ENCODE measurements at regions of chrX and their contacts with region 1.

Region 1: DNA sequence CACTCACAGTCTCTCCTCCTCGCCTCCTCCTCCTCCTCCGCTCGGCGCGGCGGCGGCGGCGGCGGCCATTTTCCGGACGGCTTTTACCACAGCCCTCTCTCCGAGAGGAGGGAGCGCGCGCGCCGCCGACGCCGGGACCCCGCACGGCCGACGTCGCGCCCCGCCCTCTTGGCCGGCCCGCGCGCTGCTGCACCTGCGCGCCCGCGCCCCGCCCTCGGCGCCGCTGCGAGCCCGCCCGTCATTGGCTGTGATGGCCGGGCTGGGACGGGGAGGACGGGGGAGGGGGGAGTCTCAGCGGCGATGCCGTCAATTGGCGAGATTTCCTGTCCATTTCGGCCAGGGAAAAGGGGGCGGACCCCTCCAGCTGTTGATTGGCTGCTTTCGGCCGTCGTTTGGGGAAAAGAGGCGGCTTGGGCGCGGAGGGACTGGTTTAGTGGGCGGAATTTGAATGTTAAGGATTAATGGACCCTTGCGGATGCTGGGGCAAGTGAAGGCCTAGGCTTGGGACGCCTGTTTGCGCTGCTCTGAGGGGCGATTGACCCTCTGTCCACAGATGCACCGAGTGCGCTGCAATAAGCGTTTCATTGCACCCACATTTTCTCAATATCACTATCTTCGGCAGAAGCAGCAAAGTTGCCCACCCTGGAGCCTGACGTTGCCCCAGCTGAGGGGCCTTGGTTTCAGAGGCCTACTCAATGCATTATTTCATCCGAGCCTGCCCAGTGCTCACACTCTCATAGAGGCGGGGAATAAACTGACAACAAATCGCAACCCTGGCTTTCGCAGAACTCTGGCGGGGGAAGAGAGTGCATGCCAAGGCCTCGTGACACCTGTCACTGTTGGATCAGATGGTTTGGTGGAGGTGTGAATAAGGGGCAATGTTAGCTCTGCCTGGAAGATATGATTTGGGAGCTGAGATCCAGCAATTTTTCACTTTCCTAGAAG is at the start of gene MECP2:
- DNase-seq: peak; percentile 72 to 93 (median 83)
- ATAC-seq: peak; percentile 88
- H3K4me3 ChIP-seq: peak within 1 kb of the TSS; percentile 84 to 85
- H3K4me3 Mint-ChIP-seq: peak within 1 kb of the TSS; percentile 97
- H3K27ac ChIP-seq: peak within 1 kb of the TSS; percentile 88 to 90
- H3K27ac Mint-ChIP-seq: peak within 1 kb of the TSS; percentile 99
- H3K4me1 ChIP-seq: peaks cover 34% of the 10 kb centered on the region
- H3K4me1 Mint-ChIP-seq: peaks cover 34% of the 10 kb centered on the region
- H3K27me3 ChIP-seq: no peaks in the 10 kb centered on the region
- H3K27me3 Mint-ChIP-seq: no peaks in the 10 kb centered on the region
- CTCF ChIP-seq: no peak
- total RNA-seq, gene MECP2: 106 to 204 TPM

Region 2: GRCh38 chrX:153470435-153471363 is 627.2 kb before region 1 on chrX and contains the start of gene HAUS7:
- CTCF ChIA-PET with region 1: no interaction called
- POLR2A ChIA-PET with region 1: no interaction called
- intact Hi-C with region 1: no loop called
- DNase-seq: peak; percentile 73 to 94 (median 87)
- ATAC-seq: peak; percentile 84
- H3K4me3 ChIP-seq: peak within 1 kb of the TSS; percentile 65 to 83
- H3K4me3 Mint-ChIP-seq: peak within 1 kb of the TSS; percentile 84
- H3K27ac ChIP-seq: peak within 1 kb of the TSS; percentile 66 to 70
- H3K27ac Mint-ChIP-seq: peak within 1 kb of the TSS; percentile 77
- H3K4me1 ChIP-seq: peaks cover 18% of the 10 kb centered on the region
- H3K4me1 Mint-ChIP-seq: peaks cover 22% of the 10 kb centered on the region
- H3K27me3 ChIP-seq: no peaks in the 10 kb centered on the region
- H3K27me3 Mint-ChIP-seq: no peaks in the 10 kb centered on the region
- CTCF ChIP-seq: peak; percentile 32
- total RNA-seq, gene HAUS7: 20.5 to 20.6 TPM

Region 3: GRCh38 chrX:154074199-154074598 is 23.7 kb before region 1 on chrX:
- CTCF ChIA-PET with region 1: no interaction called
- POLR2A ChIA-PET with region 1: no interaction called
- intact Hi-C with region 1: no loop called
- DNase-seq: no peak
- ATAC-seq: no peak
- H3K4me3 ChIP-seq: no peak overlapping the region
- H3K4me3 Mint-ChIP-seq: no peak overlapping the region
- H3K27ac ChIP-seq: no peak overlapping the region
- H3K27ac Mint-ChIP-seq: peak overlapping the region; percentile 66
- H3K4me1 ChIP-seq: peaks cover 30% of the 10 kb centered on the region
- H3K4me1 Mint-ChIP-seq: peaks cover 65% of the 10 kb centered on the region
- H3K27me3 ChIP-seq: no peaks in the 10 kb centered on the region
- H3K27me3 Mint-ChIP-seq: no peaks in the 10 kb centered on the region
- CTCF ChIP-seq: no peak

Region 4: GRCh38 chrX:154123241-154124219 is 25.7 kb after region 1 on chrX:
- CTCF ChIA-PET with region 1: interaction called, 4 read pairs
- POLR2A ChIA-PET with region 1: interaction called, 5 read pairs
- intact Hi-C with region 1: loop called in 1 of 2 experiments (anchors 2 kb)
- DNase-seq: peak in 6 of 9 experiments; percentile 25 to 65 (median 33)
- ATAC-seq: peak; percentile 75
- H3K4me3 ChIP-seq: no peak overlapping the region
- H3K4me3 Mint-ChIP-seq: peak overlapping the region; percentile 40
- H3K27ac ChIP-seq: peak overlapping the region in 1 of 2 experiments; percentile 54
- H3K27ac Mint-ChIP-seq: no peak overlapping the region
- H3K4me1 ChIP-seq: peaks cover 31% of the 10 kb centered on the region
- H3K4me1 Mint-ChIP-seq: peaks cover 18% of the 10 kb centered on the region
- H3K27me3 ChIP-seq: no peaks in the 10 kb centered on the region
- H3K27me3 Mint-ChIP-seq: no peaks in the 10 kb centered on the region
- CTCF ChIP-seq: no peak

Region 5: DNA sequence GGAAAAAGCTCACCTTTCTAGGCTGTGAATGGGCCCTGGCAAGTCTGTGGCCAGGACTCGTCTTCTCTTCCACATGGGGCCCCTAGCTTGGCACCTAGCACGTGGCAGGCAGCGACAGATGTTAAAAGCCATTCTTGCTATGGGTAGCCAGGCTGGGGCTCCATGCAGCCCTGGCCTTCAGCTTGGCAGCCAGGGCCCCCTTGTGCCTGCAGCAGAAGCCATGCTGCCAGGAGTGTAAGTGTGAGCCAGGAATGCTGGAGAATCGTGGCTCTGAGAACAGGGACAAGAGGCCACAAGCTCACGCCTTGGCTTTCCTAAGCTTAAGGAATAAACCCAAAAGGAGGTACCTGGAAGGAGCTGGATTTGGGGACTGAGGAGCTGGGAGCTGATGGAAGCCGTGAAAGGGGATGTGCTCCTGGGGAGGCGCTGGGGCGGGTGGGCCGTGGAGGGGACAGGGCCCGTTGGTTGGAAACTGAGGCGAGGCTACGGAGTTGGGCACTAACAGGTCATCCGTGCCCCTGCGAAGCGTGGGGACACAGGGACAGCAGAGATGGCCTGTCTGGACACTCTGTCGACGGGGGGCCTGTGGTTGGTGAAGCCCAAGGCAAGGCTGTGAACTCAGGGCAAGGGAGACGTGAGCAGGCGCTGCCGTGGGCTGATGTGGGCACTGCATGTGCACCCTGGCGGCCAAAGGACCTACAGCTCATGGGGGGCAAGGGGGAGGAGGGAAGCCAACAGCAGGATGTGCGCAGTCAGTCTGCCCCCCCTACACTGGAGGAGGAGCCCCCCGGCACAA is 45.3 kb after region 1 on chrX:
- CTCF ChIA-PET with region 1: no interaction called
- POLR2A ChIA-PET with region 1: no interaction called
- intact Hi-C with region 1: no loop called
- DNase-seq: no peak
- ATAC-seq: no peak
- H3K4me3 ChIP-seq: no peak overlapping the region
- H3K4me3 Mint-ChIP-seq: no peak overlapping the region
- H3K27ac ChIP-seq: no peak overlapping the region
- H3K27ac Mint-ChIP-seq: no peak overlapping the region
- H3K4me1 ChIP-seq: no peaks in the 10 kb centered on the region
- H3K4me1 Mint-ChIP-seq: peaks cover 2% of the 10 kb centered on the region
- H3K27me3 ChIP-seq: no peaks in the 10 kb centered on the region
- H3K27me3 Mint-ChIP-seq: no peaks in the 10 kb centered on the region
- CTCF ChIP-seq: no peak

Region 6: GRCh38 chrX:154370882-154371770 is 273.3 kb after region 1 on chrX:
- CTCF ChIA-PET with region 1: no interaction called
- POLR2A ChIA-PET with region 1: no interaction called
- intact Hi-C with region 1: loop called (anchors 2 to 10 kb)
- DNase-seq: peak; percentile 83 to 95 (median 91)
- ATAC-seq: peak; percentile 59
- H3K4me3 ChIP-seq: peak overlapping the region; percentile 81 to 89
- H3K4me3 Mint-ChIP-seq: peak overlapping the region; percentile 83
- H3K27ac ChIP-seq: peak overlapping the region; percentile 65 to 95
- H3K27ac Mint-ChIP-seq: peak overlapping the region; percentile 83
- H3K4me1 ChIP-seq: peaks cover 48% of the 10 kb centered on the region
- H3K4me1 Mint-ChIP-seq: peaks cover 21% of the 10 kb centered on the region
- H3K27me3 ChIP-seq: no peaks in the 10 kb centered on the region
- H3K27me3 Mint-ChIP-seq: no peaks in the 10 kb centered on the region
- CTCF ChIP-seq: no peak

Region 7: GRCh38 chrX:154378782-154379591 is 281.1 kb after region 1 on chrX and contains the start of gene EMD:
- CTCF ChIA-PET with region 1: no interaction called
- POLR2A ChIA-PET with region 1: no interaction called
- intact Hi-C with region 1: loop called in 1 of 2 experiments (anchors 10 kb)
- DNase-seq: peak; percentile 88 to 98 (median 94)
- ATAC-seq: peak; percentile 79
- H3K4me3 ChIP-seq: peak within 1 kb of the TSS; percentile 73 to 75
- H3K4me3 Mint-ChIP-seq: peak within 1 kb of the TSS; percentile 85
- H3K27ac ChIP-seq: peak within 1 kb of the TSS; percentile 98 to 99
- H3K27ac Mint-ChIP-seq: peak within 1 kb of the TSS; percentile 93
- H3K4me1 ChIP-seq: peaks cover 28% of the 10 kb centered on the region
- H3K4me1 Mint-ChIP-seq: peaks cover 18% of the 10 kb centered on the region
- H3K27me3 ChIP-seq: no peaks in the 10 kb centered on the region
- H3K27me3 Mint-ChIP-seq: no peaks in the 10 kb centered on the region
- CTCF ChIP-seq: no peak
- total RNA-seq, gene EMD: 176 TPM

Region 8: GRCh38 chrX:154478728-154479622 is 381.1 kb after region 1 on chrX and contains the start of gene LAGE3:
- CTCF ChIA-PET with region 1: no interaction called
- POLR2A ChIA-PET with region 1: no interaction called
- intact Hi-C with region 1: no loop called
- DNase-seq: peak; percentile 86 to 98 (median 93)
- ATAC-seq: peak; percentile 93
- H3K4me3 ChIP-seq: peak within 1 kb of the TSS; percentile 54 to 72
- H3K4me3 Mint-ChIP-seq: peak within 1 kb of the TSS; percentile 82
- H3K27ac ChIP-seq: peak within 1 kb of the TSS; percentile 66 to 82
- H3K27ac Mint-ChIP-seq: peak within 1 kb of the TSS; percentile 84
- H3K4me1 ChIP-seq: peaks cover 28% of the 10 kb centered on the region
- H3K4me1 Mint-ChIP-seq: peaks cover 25% of the 10 kb centered on the region
- H3K27me3 ChIP-seq: no peaks in the 10 kb centered on the region
- H3K27me3 Mint-ChIP-seq: no peaks in the 10 kb centered on the region
- CTCF ChIP-seq: no peak
- total RNA-seq, gene LAGE3: 6.3 to 6.6 TPM